T-cell (primary cell): ENCODE measurements at regions of chr17 and their contacts with region 1.

Region 1: GRCh38 chr17:78873519-78874340 is 29.3 kb downstream of the CEP295NL start:
- DNase-seq: no peak
- ATAC-seq: no peak
- H3K4me3 ChIP-seq: no peak overlapping the region
- H3K4me3 Mint-ChIP-seq: no peak overlapping the region
- H3K27ac ChIP-seq: no peak overlapping the region
- H3K27ac Mint-ChIP-seq: no peak overlapping the region
- H3K4me1 ChIP-seq: peaks cover 0 to 1% of the 10 kb centered on the region in 2 experiments
- H3K4me1 Mint-ChIP-seq: peaks cover 2 to 17% (median 4%) of the 10 kb centered on the region in 3 donors
- H3K27me3 ChIP-seq: peaks cover 0 to 18% of the 10 kb centered on the region in 2 experiments
- H3K27me3 Mint-ChIP-seq: peaks cover 0 to 16% of the 10 kb centered on the region in 2 donors

Region 2: GRCh38 chr17:78745407-78746088 is 128.2 kb before region 1 on chr17:
- CTCF ChIA-PET with region 1: no interaction called
- POLR2A ChIA-PET with region 1: no interaction called
- DNase-seq: peak in 23 of 35 experiments; percentile 26 to 84 (median 48)
- ATAC-seq: no peak
- H3K4me3 ChIP-seq: peak overlapping the region in 1 of 2 donors; percentile 17
- H3K4me3 Mint-ChIP-seq: peak overlapping the region; percentile 53 to 83 (median 60)
- H3K27ac ChIP-seq: peak overlapping the region; percentile 93
- H3K27ac Mint-ChIP-seq: peak overlapping the region; percentile 90 to 94
- H3K4me1 ChIP-seq: peaks cover 83 to 89% of the 10 kb centered on the region in 2 experiments
- H3K4me1 Mint-ChIP-seq: peaks cover 95 to 97% (median 96%) of the 10 kb centered on the region in 3 donors
- H3K27me3 ChIP-seq: no peaks in the 10 kb centered on the region
- H3K27me3 Mint-ChIP-seq: no peaks in the 10 kb centered on the region

Region 3: GRCh38 chr17:78855561-78856124 is 18.1 kb before region 1 on chr17:
- CTCF ChIA-PET with region 1: interaction called in 1 of 2 experiments, 11 read pairs
- POLR2A ChIA-PET with region 1: no interaction called
- DNase-seq: no peak
- ATAC-seq: no peak
- H3K4me3 ChIP-seq: no peak overlapping the region
- H3K4me3 Mint-ChIP-seq: no peak overlapping the region
- H3K27ac ChIP-seq: no peak overlapping the region
- H3K27ac Mint-ChIP-seq: no peak overlapping the region
- H3K4me1 ChIP-seq: no peaks in the 10 kb centered on the region
- H3K4me1 Mint-ChIP-seq: no peaks in the 10 kb centered on the region
- H3K27me3 ChIP-seq: peaks cover 0 to 13% of the 10 kb centered on the region in 2 experiments
- H3K27me3 Mint-ChIP-seq: no peaks in the 10 kb centered on the region